ENCODE measurements at regions of chr3 and their contacts with region 1.

Region 1: DNA sequence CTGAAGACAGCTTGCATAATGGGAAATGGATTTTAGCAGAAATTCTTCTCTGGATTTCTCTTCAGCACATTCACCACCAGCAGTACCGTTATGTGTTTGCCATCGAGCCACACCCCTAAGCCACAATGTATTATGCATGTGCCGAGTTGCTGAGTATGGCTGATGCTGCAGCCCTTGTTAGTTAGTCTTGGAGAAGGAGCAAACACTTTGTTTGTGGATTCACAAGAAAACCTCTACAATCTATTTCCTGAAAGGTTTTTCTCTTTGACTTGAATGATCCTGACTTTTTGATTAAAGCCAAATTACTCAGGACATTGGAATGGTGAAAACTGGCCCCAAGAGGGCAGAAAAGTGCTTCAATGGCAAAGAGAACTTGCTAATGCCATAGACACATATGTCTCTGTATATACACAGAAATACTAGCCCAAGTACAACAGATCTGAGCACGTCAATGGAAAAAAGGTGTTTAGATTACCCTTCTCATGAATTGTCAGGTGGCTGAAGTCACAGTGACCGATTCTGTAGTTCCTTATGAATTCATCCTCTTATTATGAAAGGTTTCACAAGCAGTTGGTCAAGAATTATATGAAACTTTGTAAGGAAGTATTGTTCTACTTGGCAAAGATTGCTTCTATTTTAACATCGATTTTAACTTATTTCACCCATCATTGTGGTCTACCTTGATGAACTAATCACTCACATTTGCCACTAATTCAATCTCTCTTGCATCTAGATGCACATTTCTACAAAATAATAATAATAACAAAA is 103.0 kb downstream of the P3H2 start:
- H3K4me3 Mint-ChIP-seq: no peak overlapping the region
- H3K27ac Mint-ChIP-seq: no peak overlapping the region
- H3K4me1 Mint-ChIP-seq: no peaks in the 10 kb centered on the region
- H3K27me3 Mint-ChIP-seq: no peaks in the 10 kb centered on the region

Region 2: GRCh38 chr3:189288348-189289235 is 729.1 kb before region 1 on chr3:
- intact Hi-C with region 1: no loop called
- H3K4me3 Mint-ChIP-seq: no peak overlapping the region
- H3K27ac Mint-ChIP-seq: no peak overlapping the region
- H3K4me1 Mint-ChIP-seq: peaks cover 5% of the 10 kb centered on the region
- H3K27me3 Mint-ChIP-seq: no peaks in the 10 kb centered on the region

Region 3: DNA sequence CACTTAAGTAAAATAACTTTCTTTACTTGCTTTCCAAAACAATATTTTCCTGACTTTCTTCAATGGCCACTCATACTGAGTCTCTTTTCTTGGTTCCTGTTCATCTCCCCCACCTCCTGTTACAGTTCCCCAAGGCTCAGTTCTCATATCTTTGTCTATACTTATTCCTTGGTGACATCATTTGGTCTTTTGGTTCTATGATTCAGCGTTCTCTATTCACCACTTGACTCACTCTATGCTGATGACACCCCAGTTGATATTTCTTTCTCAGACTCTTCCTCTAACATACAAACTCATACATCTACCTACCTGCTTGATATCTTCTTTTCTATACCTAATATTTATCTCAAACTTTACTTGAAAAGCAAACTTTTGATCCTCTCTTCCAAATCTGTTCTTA is 188.0 kb after region 1 on chr3:
- intact Hi-C with region 1: loop called (anchors 1 kb)
- H3K4me3 Mint-ChIP-seq: no peak overlapping the region
- H3K27ac Mint-ChIP-seq: no peak overlapping the region
- H3K4me1 Mint-ChIP-seq: peaks cover 24% of the 10 kb centered on the region
- H3K27me3 Mint-ChIP-seq: peaks cover 11% of the 10 kb centered on the region

Region 4: GRCh38 chr3:190513409-190514162 is 495.9 kb after region 1 on chr3 and contains the start of gene IL1RAP:
- intact Hi-C with region 1: no loop called
- H3K4me3 Mint-ChIP-seq: peak within 1 kb of the TSS; percentile 92
- H3K27ac Mint-ChIP-seq: peak within 1 kb of the TSS; percentile 90
- H3K4me1 Mint-ChIP-seq: peaks cover 46% of the 10 kb centered on the region
- H3K27me3 Mint-ChIP-seq: no peaks in the 10 kb centered on the region